Left lung (tissue), 14 donors: ENCODE measurements at regions of chr1 and their contacts with region 1.

Region 1: DNA sequence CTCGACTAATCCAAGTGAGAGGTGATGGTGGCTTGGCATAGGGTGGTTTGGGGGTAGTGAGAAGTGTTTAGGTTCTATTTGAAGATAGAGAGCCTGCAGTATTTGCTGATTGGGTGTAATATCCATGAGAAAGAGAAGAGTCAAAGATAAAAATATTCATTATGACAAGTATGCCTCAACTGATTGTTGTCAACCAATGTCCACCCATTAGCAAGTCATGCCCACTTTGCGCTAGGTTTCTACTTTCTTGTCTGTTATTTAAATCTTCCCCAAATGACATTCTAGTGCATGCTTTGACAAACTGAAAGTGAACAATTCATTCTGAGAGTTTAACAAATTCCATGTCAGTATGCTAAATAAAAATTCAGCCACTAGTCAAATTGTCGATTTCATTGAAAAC is 3.8 kb upstream of the XCL1 start:
- DNase-seq: no peak
- ATAC-seq: no peak
- H3K4me3 ChIP-seq: no peak overlapping the region
- H3K27ac ChIP-seq: no peak overlapping the region
- H3K4me1 ChIP-seq: no peaks in the 10 kb centered on the region
- H3K27me3 ChIP-seq: no peaks in the 10 kb centered on the region
- CTCF ChIP-seq: no peak

Region 2: GRCh38 chr1:168301664-168302334 is 270.8 kb before region 1 on chr1:
- intact Hi-C with region 1: no loop called
- DNase-seq: no peak
- ATAC-seq: no peak
- H3K4me3 ChIP-seq: no peak overlapping the region
- H3K27ac ChIP-seq: no peak overlapping the region
- H3K4me1 ChIP-seq: no peaks in the 10 kb centered on the region
- H3K27me3 ChIP-seq: no peaks in the 10 kb centered on the region
- CTCF ChIP-seq: no peak

Region 3: DNA sequence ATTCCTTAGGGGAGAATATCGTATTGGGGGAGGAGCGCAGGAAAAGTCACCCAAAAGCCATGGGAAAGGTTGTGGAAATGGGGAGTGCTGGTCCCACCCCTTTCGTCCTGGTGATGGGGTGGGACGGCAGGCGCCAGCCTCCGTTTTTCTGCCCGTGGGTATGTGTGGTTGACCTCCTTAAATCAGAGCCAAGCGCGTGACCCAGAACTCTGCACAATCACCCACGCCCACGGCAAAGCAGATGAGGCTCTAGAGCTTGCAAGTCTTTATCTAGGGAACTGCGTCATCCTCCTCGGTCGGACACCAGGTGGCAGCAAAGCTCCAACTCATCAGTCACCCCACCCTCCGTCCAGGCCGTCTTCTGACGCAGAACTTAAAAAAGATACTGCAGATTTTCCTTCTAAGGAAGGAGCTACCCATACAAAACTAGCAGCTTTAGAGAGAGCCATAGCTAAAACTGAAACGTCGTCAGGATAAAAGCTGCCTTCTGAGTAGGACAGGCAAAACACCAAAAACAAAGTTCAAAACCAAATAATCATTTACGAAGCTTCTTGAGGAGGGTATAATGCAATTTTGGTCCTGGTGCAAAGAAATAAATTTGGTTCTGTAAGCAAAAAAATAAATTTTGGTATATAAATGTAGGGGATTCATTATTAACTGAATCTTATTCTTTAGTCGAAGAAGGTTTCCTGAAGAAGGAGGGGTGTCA is 229.9 kb before region 1 on chr1:
- intact Hi-C with region 1: loop called in 1 of 2 experiments (anchors 10 kb)
- DNase-seq: peak; percentile 86 to 93 (median 90)
- ATAC-seq: peak; percentile 99
- H3K4me3 ChIP-seq: no peak overlapping the region
- H3K27ac ChIP-seq: peak overlapping the region in 1 of 2 donors; percentile 62
- H3K4me1 ChIP-seq: peaks cover 7 to 13% of the 10 kb centered on the region in 2 donors
- H3K27me3 ChIP-seq: no peaks in the 10 kb centered on the region
- CTCF ChIP-seq: peak; percentile 77 to 81

Region 4: GRCh38 chr1:168728473-168729404 is 156.1 kb after region 1 on chr1 and contains the start of gene DPT:
- intact Hi-C with region 1: no loop called
- DNase-seq: peak in 1 of 4 donors; percentile 47
- ATAC-seq: peak; percentile 42
- H3K4me3 ChIP-seq: peak within 1 kb of the TSS in 1 of 2 donors; percentile 5
- H3K27ac ChIP-seq: no peak within 1 kb of the TSS
- H3K4me1 ChIP-seq: no peaks in the 10 kb centered on the region
- H3K27me3 ChIP-seq: no peaks in the 10 kb centered on the region
- CTCF ChIP-seq: no peak
- polyA plus RNA-seq, gene DPT: 0.46 to 4.4 (median 1.4) TPM